Vagina (tissue), 2 donors: ENCODE measurements at regions of chr3 and their contacts with region 1.

Region 1: DNA sequence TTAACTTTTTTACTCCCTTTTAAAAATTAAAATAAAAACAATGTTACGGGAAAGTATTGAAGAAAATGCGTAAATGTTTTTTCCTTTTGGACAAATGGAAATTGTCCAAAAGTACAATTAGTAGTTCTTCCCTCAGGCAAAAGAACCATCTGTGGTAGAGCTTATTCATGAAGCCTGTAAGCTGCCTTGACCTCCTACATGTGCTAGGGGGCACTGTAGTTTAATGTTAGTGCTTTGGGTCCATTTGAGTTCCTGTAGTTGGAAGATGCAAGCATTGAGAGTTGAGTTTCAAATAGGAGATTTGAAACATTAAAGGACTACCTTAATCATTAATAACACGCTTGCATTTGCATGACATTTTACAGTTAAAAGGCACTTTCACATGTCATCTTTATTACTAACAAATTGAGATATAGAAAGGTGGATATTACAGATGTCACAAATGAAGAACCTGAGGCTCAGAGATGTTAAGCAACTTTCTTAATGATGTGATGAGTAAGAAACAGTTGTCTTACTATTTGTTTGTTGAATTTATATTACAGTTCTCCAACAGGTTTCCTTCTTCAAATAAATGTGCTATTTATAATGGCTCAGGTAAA is 1.8 kb upstream of the ZNF385D start:
- DNase-seq: no peak
- H3K4me3 ChIP-seq: no peak overlapping the region
- H3K27ac ChIP-seq: no peak overlapping the region
- H3K4me1 ChIP-seq: peaks cover 8% of the 10 kb centered on the region
- H3K27me3 ChIP-seq: no peaks in the 10 kb centered on the region
- CTCF ChIP-seq: peak in 2 of 3 experiments; percentile 36 to 59
- POLR2A ChIP-seq: no peak

Region 2: GRCh38 chr3:21894459-21895340 is 141.9 kb after region 1 on chr3:
- intact Hi-C with region 1: loop called (anchors 10 kb)
- DNase-seq: no peak
- H3K4me3 ChIP-seq: no peak overlapping the region
- H3K27ac ChIP-seq: no peak overlapping the region
- H3K4me1 ChIP-seq: no peaks in the 10 kb centered on the region
- H3K27me3 ChIP-seq: no peaks in the 10 kb centered on the region
- CTCF ChIP-seq: peak; percentile 32 to 62 (median 49)
- POLR2A ChIP-seq: no peak

Region 3: GRCh38 chr3:22156868-22157267 is 404.0 kb after region 1 on chr3:
- intact Hi-C with region 1: no loop called
- DNase-seq: no peak
- H3K4me3 ChIP-seq: no peak overlapping the region
- H3K27ac ChIP-seq: no peak overlapping the region
- H3K4me1 ChIP-seq: no peaks in the 10 kb centered on the region
- H3K27me3 ChIP-seq: no peaks in the 10 kb centered on the region
- CTCF ChIP-seq: no peak
- POLR2A ChIP-seq: no peak